ENCODE measurements at regions of chr6 and their contacts with region 1.

Region 1: DNA sequence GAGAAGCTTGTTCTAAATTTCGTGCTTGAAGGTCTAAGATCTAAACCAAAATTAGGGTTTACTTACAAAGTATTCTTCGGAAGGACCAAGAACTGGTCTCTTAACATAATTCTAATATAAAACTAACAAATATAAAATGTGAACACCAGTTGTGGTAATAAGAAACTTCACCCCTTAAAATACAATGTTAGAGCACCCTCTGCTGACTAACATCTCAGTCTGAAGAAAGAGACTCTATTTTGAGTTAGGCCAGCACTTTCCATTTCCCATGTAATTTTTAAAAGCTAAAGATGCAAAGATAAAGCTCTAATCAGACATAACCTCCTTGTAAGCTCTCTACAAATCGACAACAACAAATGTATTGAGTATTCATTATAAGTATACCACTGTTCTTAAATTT is 24.6 kb downstream of the ATG5 start:
- DNase-seq: no peak
- ATAC-seq: peak; percentile 71

Region 2: GRCh38 chr6:105431226-105431625 is 869.7 kb before region 1 on chr6:
- intact Hi-C with region 1: loop called in 1 of 2 experiments (anchors 10 kb)
- DNase-seq: no peak
- ATAC-seq: no peak

Region 3: DNA sequence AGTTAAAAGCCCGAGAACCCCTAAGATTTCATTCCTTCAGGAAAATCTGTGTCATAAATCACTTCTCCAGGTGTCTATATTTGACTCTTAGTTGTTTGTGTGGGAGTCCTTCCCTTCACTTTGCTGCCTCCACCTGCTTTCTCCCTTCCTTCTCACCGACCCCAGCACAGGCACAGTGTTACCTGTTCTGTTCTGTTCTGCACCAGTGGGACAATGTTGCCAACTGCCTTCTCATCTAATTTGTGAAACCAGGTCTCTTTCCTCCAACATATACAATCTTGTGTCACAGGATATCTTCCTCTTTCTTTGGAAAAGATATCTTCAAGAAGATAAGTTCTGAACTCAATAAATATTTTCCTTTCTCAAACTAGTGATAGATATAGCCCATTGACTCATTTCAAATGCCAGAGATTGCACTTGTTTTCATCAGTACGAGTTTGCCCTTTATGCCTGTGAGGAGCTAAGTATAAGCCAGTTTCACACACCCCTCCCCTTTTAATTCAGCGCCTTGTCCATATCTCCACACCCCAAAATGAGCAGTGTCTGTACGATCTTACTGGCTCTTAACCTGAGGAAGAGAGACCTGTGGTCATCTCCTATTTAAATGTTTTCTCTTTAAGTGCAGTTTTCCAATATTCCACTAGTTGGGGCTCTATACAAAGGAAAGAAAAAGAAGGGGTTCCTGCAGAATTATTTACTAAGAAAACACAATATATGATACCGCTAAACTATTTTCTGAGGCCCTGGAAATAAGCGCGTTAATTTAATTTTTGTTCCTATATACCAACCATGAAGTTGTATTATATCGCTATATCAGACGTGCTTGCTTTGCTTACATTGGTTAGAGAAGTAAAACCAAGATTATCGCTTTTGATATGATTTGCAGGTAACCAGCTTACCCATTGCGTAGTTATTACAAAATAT is 816.4 kb before region 1 on chr6:
- intact Hi-C with region 1: loop called in 1 of 2 experiments (anchors 10 kb)
- DNase-seq: no peak
- ATAC-seq: peak; percentile 68

Region 4: GRCh38 chr6:105733565-105734162 is 567.3 kb before region 1 on chr6:
- intact Hi-C with region 1: loop called in 1 of 2 experiments (anchors 10 kb)
- DNase-seq: no peak
- ATAC-seq: no peak

Measured in left colon (tissue), 2 donors.